Right lobe of liver (tissue), 6 donors: ENCODE measurements at regions of chr7 and their contacts with region 1.

Region 1: GRCh38 chr7:36994456-36995112 is 270.3 kb upstream of the AOAH start:
- DNase-seq: no peak
- ATAC-seq: no peak
- H3K4me3 ChIP-seq: no peak overlapping the region
- H3K27ac ChIP-seq: no peak overlapping the region
- H3K4me1 ChIP-seq: no peaks in the 10 kb centered on the region
- H3K27me3 ChIP-seq: no peaks in the 10 kb centered on the region
- CTCF ChIP-seq: no peak
- POLR2A ChIP-seq: no peak

Region 2: GRCh38 chr7:36794689-36795088 is 199.9 kb before region 1 on chr7:
- intact Hi-C with region 1: no loop called
- DNase-seq: no peak
- ATAC-seq: peak in 1 of 4 donors; percentile 9
- H3K4me3 ChIP-seq: no peak overlapping the region
- H3K27ac ChIP-seq: peak overlapping the region; percentile 50 to 96 (median 93)
- H3K4me1 ChIP-seq: peaks cover 0 to 28% (median 14%) of the 10 kb centered on the region in 4 donors
- H3K27me3 ChIP-seq: no peaks in the 10 kb centered on the region
- CTCF ChIP-seq: no peak
- POLR2A ChIP-seq: no peak

Region 3: DNA sequence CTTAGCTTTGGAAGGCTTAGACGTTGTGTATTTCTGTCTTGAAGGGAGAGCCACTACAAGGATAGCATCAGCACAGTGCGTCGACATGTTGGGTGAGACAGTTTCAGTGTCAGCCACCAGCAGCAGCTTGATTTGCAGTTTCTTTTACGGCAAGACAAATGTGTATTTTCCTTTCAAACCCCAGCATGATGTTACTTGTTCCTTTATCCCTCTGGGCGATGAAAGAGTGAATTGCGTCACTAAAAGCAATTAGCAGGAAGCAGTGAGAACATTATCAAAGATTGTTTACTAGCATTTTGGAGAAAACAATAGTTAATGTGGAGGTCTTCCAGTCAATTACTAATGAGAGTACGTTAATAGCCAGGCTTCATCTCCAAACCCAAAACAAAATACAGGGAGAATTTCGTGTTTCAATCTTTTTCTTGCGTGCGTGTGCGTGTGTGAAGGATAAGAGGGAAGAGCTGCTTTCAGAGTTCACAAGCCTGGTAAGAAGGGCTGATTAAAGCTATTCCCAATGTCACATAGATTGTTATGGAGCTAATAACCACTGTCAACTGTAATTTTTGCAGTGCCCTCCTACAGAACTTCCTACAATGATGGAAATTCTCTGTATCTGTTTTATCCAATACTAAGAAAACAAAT is 113.2 kb before region 1 on chr7:
- intact Hi-C with region 1: no loop called
- DNase-seq: no peak
- ATAC-seq: no peak
- H3K4me3 ChIP-seq: no peak overlapping the region
- H3K27ac ChIP-seq: no peak overlapping the region
- H3K4me1 ChIP-seq: peaks cover 0 to 9% (median 4%) of the 10 kb centered on the region in 4 donors
- H3K27me3 ChIP-seq: no peaks in the 10 kb centered on the region
- CTCF ChIP-seq: no peak
- POLR2A ChIP-seq: no peak

Region 4: DNA sequence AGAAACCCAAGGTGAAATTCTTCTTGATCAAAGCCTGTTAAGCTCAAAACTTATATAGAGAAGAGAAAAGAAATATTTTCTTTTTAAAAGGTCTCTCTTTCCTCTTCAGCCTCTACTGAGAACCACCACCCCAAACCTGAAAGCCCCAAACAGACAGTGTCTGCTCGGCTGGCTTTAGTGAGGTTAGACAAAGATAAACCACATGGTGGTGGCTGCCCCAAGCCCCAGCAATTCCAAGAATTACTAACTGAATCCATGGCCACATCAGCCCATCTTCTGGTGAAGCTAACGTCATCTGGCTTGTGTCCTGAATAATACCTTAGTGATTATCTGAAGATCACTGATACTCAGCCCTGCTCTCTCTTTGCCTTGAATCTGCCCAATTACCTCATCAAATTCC is 179.1 kb after region 1 on chr7:
- intact Hi-C with region 1: loop called in 1 of 2 experiments (anchors 10 kb)
- DNase-seq: no peak
- ATAC-seq: no peak
- H3K4me3 ChIP-seq: no peak overlapping the region
- H3K27ac ChIP-seq: no peak overlapping the region
- H3K4me1 ChIP-seq: no peaks in the 10 kb centered on the region
- H3K27me3 ChIP-seq: no peaks in the 10 kb centered on the region
- CTCF ChIP-seq: no peak
- POLR2A ChIP-seq: no peak